ENCODE measurements at regions of chr12 and their contacts with region 1.

Region 1: GRCh38 chr12:88816211-88816613 is 235.9 kb upstream of the KITLG start:
- DNase-seq: no peak
- H3K4me3 Mint-ChIP-seq: peak overlapping the region; percentile 22
- H3K27ac Mint-ChIP-seq: peak overlapping the region; percentile 3
- H3K4me1 Mint-ChIP-seq: peaks cover 49% of the 10 kb centered on the region
- H3K27me3 Mint-ChIP-seq: no peaks in the 10 kb centered on the region
- CTCF ChIP-seq: no peak

Region 2: DNA sequence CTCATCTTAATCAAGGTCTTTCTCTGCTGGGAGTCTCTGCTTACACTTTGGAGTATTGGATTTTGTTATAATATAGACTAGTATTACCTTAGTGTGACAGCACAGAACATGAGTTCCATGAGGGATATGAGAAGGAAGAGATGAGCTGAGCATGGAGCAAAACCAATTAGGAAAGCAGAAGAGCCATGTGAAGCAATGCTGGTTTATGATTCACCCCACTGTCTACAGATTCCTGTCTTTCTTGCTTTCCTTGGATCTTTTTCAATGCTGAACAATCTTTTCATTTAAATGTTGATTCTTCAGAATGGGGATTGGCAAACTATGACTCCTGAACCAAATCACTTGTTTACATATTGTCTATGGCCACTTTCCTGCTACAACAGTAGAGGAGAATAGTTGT is 165.5 kb before region 1 on chr12:
- CTCF ChIA-PET with region 1: no interaction called
- intact Hi-C with region 1: loop called (anchors 10 kb)
- DNase-seq: no peak
- H3K4me3 Mint-ChIP-seq: no peak overlapping the region
- H3K27ac Mint-ChIP-seq: no peak overlapping the region
- H3K4me1 Mint-ChIP-seq: no peaks in the 10 kb centered on the region
- H3K27me3 Mint-ChIP-seq: no peaks in the 10 kb centered on the region
- CTCF ChIP-seq: no peak

Region 3: GRCh38 chr12:88746386-88746785 is 69.8 kb before region 1 on chr12:
- CTCF ChIA-PET with region 1: no interaction called
- intact Hi-C with region 1: loop called (anchors 5 kb)
- DNase-seq: no peak
- H3K4me3 Mint-ChIP-seq: no peak overlapping the region
- H3K27ac Mint-ChIP-seq: no peak overlapping the region
- H3K4me1 Mint-ChIP-seq: peaks cover 52% of the 10 kb centered on the region
- H3K27me3 Mint-ChIP-seq: no peaks in the 10 kb centered on the region
- CTCF ChIP-seq: no peak

Region 4: GRCh38 chr12:88854260-88854659 is 38.0 kb after region 1 on chr12:
- CTCF ChIA-PET with region 1: no interaction called
- intact Hi-C with region 1: no loop called
- DNase-seq: peak; percentile 22
- H3K4me3 Mint-ChIP-seq: peak overlapping the region; percentile 8
- H3K27ac Mint-ChIP-seq: peak overlapping the region; percentile 79
- H3K4me1 Mint-ChIP-seq: peaks cover 32% of the 10 kb centered on the region
- H3K27me3 Mint-ChIP-seq: no peaks in the 10 kb centered on the region
- CTCF ChIP-seq: no peak

Region 5: DNA sequence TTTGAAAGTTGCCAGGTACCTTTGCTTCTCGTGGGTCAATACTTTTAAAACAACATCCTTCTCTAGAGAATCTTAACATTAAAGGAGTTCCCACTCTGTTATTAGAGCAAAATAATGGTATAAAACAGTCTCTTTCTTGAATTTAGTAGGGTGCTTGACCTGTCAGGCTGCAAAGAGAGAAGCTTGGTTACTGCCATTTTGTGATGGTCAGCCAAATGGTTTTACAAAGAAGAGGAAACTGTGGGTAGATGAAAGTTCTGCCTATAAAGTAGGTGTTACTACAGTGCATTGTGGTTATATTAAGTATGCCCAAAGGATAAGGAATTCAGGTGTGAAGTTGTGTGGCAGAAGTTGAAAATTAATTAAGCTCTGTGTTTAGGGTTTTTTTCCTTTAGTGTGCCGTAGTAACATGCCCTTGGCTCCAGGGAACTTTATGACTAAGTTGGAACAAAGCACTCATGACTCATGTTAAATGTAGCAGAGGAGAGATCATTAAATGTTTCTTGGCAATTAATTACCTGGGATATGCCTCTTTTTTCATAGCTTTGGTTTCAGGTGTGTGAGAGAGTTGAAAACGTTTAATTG is 118.0 kb after region 1 on chr12:
- CTCF ChIA-PET with region 1: no interaction called
- intact Hi-C with region 1: loop called (anchors 5 kb)
- DNase-seq: peak; percentile 16
- H3K4me3 Mint-ChIP-seq: peak overlapping the region; percentile 8
- H3K27ac Mint-ChIP-seq: peak overlapping the region; percentile 71
- H3K4me1 Mint-ChIP-seq: peaks cover 57% of the 10 kb centered on the region
- H3K27me3 Mint-ChIP-seq: no peaks in the 10 kb centered on the region
- CTCF ChIP-seq: no peak

Region 6: GRCh38 chr12:88970742-88971141 is 154.5 kb after region 1 on chr12:
- CTCF ChIA-PET with region 1: no interaction called
- intact Hi-C with region 1: no loop called
- DNase-seq: no peak
- H3K4me3 Mint-ChIP-seq: no peak overlapping the region
- H3K27ac Mint-ChIP-seq: no peak overlapping the region
- H3K4me1 Mint-ChIP-seq: no peaks in the 10 kb centered on the region
- H3K27me3 Mint-ChIP-seq: no peaks in the 10 kb centered on the region
- CTCF ChIP-seq: no peak

Region 7: DNA sequence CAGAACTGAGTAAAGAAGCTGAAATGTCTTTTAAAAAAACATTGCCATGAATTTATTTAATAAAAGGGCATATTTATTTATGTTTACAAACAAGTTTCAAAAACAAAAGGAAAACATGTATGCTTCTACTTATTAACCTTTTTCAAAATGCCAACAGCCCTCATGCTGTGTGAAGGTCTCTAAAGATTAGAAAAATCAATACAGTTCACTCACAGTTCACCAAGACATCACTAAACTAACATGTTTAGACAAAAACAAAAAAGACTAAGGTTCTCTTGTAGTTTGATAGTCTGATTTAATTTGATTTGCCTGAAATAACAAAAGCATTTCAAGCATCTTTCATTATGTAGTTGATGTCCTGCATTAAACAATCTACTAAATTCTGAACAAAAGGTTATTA is 773.5 kb after region 1 on chr12:
- CTCF ChIA-PET with region 1: no interaction called
- intact Hi-C with region 1: no loop called
- DNase-seq: no peak
- H3K4me3 Mint-ChIP-seq: no peak overlapping the region
- H3K27ac Mint-ChIP-seq: no peak overlapping the region
- H3K4me1 Mint-ChIP-seq: peaks cover 18% of the 10 kb centered on the region
- H3K27me3 Mint-ChIP-seq: no peaks in the 10 kb centered on the region
- CTCF ChIP-seq: no peak